CD4-positive, alpha-beta memory T cell (primary cell): ENCODE measurements at regions of chr1 and their contacts with region 1.

Region 1: DNA sequence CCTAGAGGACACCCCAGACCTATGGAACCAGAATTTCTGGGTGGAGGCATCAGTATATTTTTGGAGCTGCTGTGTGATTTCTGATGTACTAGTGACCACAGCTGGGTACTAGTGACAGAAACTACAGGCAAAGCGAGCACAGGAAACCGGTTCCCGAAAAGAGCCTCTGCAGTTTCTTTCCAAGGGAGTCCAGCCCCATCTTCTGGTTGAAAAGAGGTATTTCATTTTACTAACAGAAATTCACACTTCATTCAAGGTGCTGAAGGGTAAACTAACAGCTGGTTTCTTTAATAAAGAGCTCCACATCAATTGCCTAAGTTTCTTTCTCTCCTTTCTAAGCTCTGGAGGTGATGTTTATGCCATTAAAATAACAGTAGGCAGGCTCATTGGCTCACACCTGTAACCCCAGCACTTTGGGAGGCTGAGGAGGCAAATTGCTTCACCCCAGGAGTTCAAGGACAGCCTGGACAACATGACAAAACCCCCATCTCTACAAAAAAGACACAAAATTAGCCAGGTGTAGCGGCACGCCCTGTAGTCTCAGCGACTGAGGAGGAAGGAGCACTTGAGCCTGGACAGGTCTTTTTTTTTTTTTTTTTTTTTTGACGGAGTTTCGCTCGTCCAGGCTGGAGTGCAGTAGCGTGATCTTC is 22.0 kb downstream of the THAP3 start:
- DNase-seq: peak in 4 of 5 donors; percentile 53 to 59 (median 56)
- H3K4me3 ChIP-seq: no peak overlapping the region
- H3K4me3 Mint-ChIP-seq: no peak overlapping the region
- H3K27ac ChIP-seq: no peak overlapping the region
- H3K27ac Mint-ChIP-seq: peak overlapping the region in 2 of 7 donors; percentile 10 to 19
- H3K4me1 ChIP-seq: peaks cover 6% of the 10 kb centered on the region
- H3K4me1 Mint-ChIP-seq: peaks cover 0 to 5% (median 3%) of the 10 kb centered on the region in 4 donors
- H3K27me3 ChIP-seq: no peaks in the 10 kb centered on the region
- H3K27me3 Mint-ChIP-seq: no peaks in the 10 kb centered on the region

Region 2: GRCh38 chr1:6359216-6360116 is 287.2 kb before region 1 on chr1:
- CTCF ChIA-PET with region 1: no interaction called
- POLR2A ChIA-PET with region 1: no interaction called
- intact Hi-C with region 1: no loop called
- DNase-seq: peak; percentile 50 to 74 (median 62)
- H3K4me3 ChIP-seq: peak overlapping the region; percentile 24 to 38
- H3K4me3 Mint-ChIP-seq: peak overlapping the region; percentile 71 to 90 (median 77)
- H3K27ac ChIP-seq: peak overlapping the region; percentile 76
- H3K27ac Mint-ChIP-seq: peak overlapping the region; percentile 94 to 97 (median 96)
- H3K4me1 ChIP-seq: peaks cover 54% of the 10 kb centered on the region
- H3K4me1 Mint-ChIP-seq: peaks cover 29 to 65% (median 47%) of the 10 kb centered on the region in 4 donors
- H3K27me3 ChIP-seq: no peaks in the 10 kb centered on the region
- H3K27me3 Mint-ChIP-seq: no peaks in the 10 kb centered on the region

Region 3: GRCh38 chr1:6423321-6423999 is 223.2 kb before region 1 on chr1:
- CTCF ChIA-PET with region 1: interaction called, 20 read pairs
- POLR2A ChIA-PET with region 1: no interaction called
- intact Hi-C with region 1: loop called (anchors 1 kb)
- DNase-seq: peak; percentile 64 to 74 (median 69)
- H3K4me3 ChIP-seq: peak overlapping the region in 1 of 2 donors; percentile 38
- H3K4me3 Mint-ChIP-seq: peak overlapping the region; percentile 46 to 76 (median 68)
- H3K27ac ChIP-seq: no peak overlapping the region
- H3K27ac Mint-ChIP-seq: no peak overlapping the region
- H3K4me1 ChIP-seq: peaks cover 35% of the 10 kb centered on the region
- H3K4me1 Mint-ChIP-seq: peaks cover 6 to 35% (median 19%) of the 10 kb centered on the region in 4 donors
- H3K27me3 ChIP-seq: peaks cover 37% of the 10 kb centered on the region
- H3K27me3 Mint-ChIP-seq: peaks cover 22 to 24% of the 10 kb centered on the region in 2 donors

Region 4: GRCh38 chr1:6481820-6482219 is 164.8 kb before region 1 on chr1:
- CTCF ChIA-PET with region 1: interaction called, 158 read pairs
- POLR2A ChIA-PET with region 1: no interaction called
- intact Hi-C with region 1: loop called (anchors 1 kb)
- DNase-seq: no peak
- H3K4me3 ChIP-seq: no peak overlapping the region
- H3K4me3 Mint-ChIP-seq: no peak overlapping the region
- H3K27ac ChIP-seq: no peak overlapping the region
- H3K27ac Mint-ChIP-seq: no peak overlapping the region
- H3K4me1 ChIP-seq: peaks cover 12% of the 10 kb centered on the region
- H3K4me1 Mint-ChIP-seq: peaks cover 2 to 10% (median 7%) of the 10 kb centered on the region in 4 donors
- H3K27me3 ChIP-seq: peaks cover 14% of the 10 kb centered on the region
- H3K27me3 Mint-ChIP-seq: peaks cover 7 to 9% of the 10 kb centered on the region in 2 donors

Region 5: GRCh38 chr1:6489799-6490180 is 156.8 kb before region 1 on chr1:
- CTCF ChIA-PET with region 1: interaction called, 158 read pairs
- POLR2A ChIA-PET with region 1: no interaction called
- intact Hi-C with region 1: loop called (anchors 1 kb)
- DNase-seq: peak; percentile 73 to 80 (median 77)
- H3K4me3 ChIP-seq: peak overlapping the region; percentile 78 to 80
- H3K4me3 Mint-ChIP-seq: peak overlapping the region; percentile 69 to 87 (median 81)
- H3K27ac ChIP-seq: peak overlapping the region; percentile 57
- H3K27ac Mint-ChIP-seq: peak overlapping the region in 3 of 7 donors; percentile 47 to 72 (median 59)
- H3K4me1 ChIP-seq: peaks cover 28% of the 10 kb centered on the region
- H3K4me1 Mint-ChIP-seq: peaks cover 15 to 53% (median 31%) of the 10 kb centered on the region in 4 donors
- H3K27me3 ChIP-seq: peaks cover 10% of the 10 kb centered on the region
- H3K27me3 Mint-ChIP-seq: peaks cover 6 to 9% of the 10 kb centered on the region in 2 donors

Region 6: DNA sequence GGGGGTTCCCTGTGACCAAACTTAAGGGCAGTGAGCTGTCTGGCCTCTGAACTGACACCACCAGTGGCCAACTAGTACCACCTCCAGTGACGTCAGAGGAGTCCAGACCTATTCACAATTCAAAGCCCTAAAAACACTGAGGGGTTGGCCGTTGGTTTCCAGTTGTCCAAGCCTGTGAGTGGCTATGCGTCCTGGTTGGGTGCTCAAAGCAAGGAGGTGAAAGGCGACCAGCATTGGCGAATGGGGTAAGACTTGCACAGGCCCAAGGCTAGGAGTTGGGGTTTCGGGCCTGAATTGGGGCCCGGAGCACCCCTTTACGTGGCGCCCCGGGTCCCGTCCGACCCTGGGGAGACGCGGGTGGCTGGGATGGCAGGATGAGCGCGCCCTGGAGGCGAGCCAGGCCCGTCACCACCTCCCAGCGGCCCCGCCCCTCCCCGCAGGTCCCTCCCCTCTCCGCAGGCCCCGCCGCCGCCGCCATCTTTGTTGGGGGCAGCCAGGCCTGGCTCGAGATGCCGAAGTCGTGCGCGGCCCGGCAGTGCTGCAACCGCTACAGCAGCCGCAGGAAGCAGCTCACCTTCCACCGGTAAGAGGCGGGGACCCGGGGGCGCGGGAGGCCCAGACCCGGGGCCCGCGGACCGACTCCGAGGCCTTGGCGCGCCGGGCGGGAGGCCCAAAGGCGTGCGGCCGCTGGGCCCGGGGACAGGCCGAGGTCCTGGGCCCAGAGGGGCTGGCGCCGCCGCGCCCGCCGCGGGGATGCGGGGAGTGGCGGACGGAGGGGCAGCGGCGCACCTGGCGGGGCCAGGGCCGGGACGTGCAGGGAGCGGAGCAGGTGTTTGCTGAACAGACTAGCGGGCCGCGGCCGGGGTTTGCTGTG is 21.7 kb before region 1 on chr1 and contains the start of gene THAP3:
- CTCF ChIA-PET with region 1: interaction called, 10 read pairs
- POLR2A ChIA-PET with region 1: no interaction called
- intact Hi-C with region 1: loop called (anchors 2 kb)
- DNase-seq: peak; percentile 84 to 91 (median 86)
- H3K4me3 ChIP-seq: peak within 1 kb of the TSS; percentile 63 to 73
- H3K4me3 Mint-ChIP-seq: peak within 1 kb of the TSS; percentile 90 to 95 (median 94)
- H3K27ac ChIP-seq: peak within 1 kb of the TSS; percentile 60
- H3K27ac Mint-ChIP-seq: peak within 1 kb of the TSS; percentile 78 to 93 (median 90)
- H3K4me1 ChIP-seq: peaks cover 23% of the 10 kb centered on the region
- H3K4me1 Mint-ChIP-seq: peaks cover 15 to 35% (median 28%) of the 10 kb centered on the region in 4 donors
- H3K27me3 ChIP-seq: no peaks in the 10 kb centered on the region
- H3K27me3 Mint-ChIP-seq: no peaks in the 10 kb centered on the region
- total RNA-seq, gene THAP3: 29.5 to 34.5 TPM

Region 7: GRCh38 chr1:6657138-6657537 is 10.5 kb after region 1 on chr1:
- CTCF ChIA-PET with region 1: interaction called, 10 read pairs
- POLR2A ChIA-PET with region 1: no interaction called
- intact Hi-C with region 1: no loop called
- DNase-seq: no peak
- H3K4me3 ChIP-seq: no peak overlapping the region
- H3K4me3 Mint-ChIP-seq: no peak overlapping the region
- H3K27ac ChIP-seq: no peak overlapping the region
- H3K27ac Mint-ChIP-seq: peak overlapping the region in 2 of 7 donors; percentile 29 to 48
- H3K4me1 ChIP-seq: peaks cover 3% of the 10 kb centered on the region
- H3K4me1 Mint-ChIP-seq: peaks cover 2 to 16% (median 4%) of the 10 kb centered on the region in 4 donors
- H3K27me3 ChIP-seq: no peaks in the 10 kb centered on the region
- H3K27me3 Mint-ChIP-seq: no peaks in the 10 kb centered on the region

Region 8: DNA sequence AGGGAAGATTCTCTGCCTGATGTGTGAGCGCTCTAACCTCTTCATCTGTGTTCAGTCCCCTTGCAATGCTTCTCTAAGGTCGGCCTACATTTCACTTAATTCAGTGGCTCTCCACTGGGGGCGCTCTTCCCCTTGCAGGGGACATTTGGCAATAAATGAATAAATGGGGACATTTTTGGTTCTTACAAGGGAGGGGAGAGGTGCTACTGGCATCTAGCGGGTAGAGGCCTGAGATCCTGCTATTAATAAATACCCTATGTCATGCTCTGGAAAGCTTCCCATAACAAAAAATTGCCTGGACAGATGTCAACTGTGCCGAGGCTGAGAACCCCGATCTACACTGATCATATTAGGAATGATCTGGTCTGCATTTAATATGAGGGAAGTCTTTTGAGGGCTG is 80.9 kb after region 1 on chr1:
- CTCF ChIA-PET with region 1: no interaction called
- POLR2A ChIA-PET with region 1: no interaction called
- intact Hi-C with region 1: no loop called
- DNase-seq: peak in 4 of 5 donors; percentile 43 to 46 (median 44)
- H3K4me3 ChIP-seq: no peak overlapping the region
- H3K4me3 Mint-ChIP-seq: no peak overlapping the region
- H3K27ac ChIP-seq: no peak overlapping the region
- H3K27ac Mint-ChIP-seq: no peak overlapping the region
- H3K4me1 ChIP-seq: no peaks in the 10 kb centered on the region
- H3K4me1 Mint-ChIP-seq: peaks cover 0 to 2% (median under 1%) of the 10 kb centered on the region in 4 donors
- H3K27me3 ChIP-seq: no peaks in the 10 kb centered on the region
- H3K27me3 Mint-ChIP-seq: peaks cover 4 to 6% of the 10 kb centered on the region in 2 donors